ENCODE measurements at regions of chr6 and their contacts with region 1.

Region 1: GRCh38 chr6:29850011-29850553 is 22.5 kb downstream of the HLA-G start:
- DNase-seq: no peak
- H3K4me3 ChIP-seq: peak overlapping the region in 1 of 3 donors; percentile 43
- H3K27ac ChIP-seq: no peak overlapping the region
- H3K4me1 ChIP-seq: no peaks in the 10 kb centered on the region
- H3K27me3 ChIP-seq: peaks cover 0 to 12% of the 10 kb centered on the region in 2 donors
- CTCF ChIP-seq: no peak
- POLR2A ChIP-seq: no peak

Region 2: GRCh38 chr6:29705389-29706231 is 144.5 kb before region 1 on chr6:
- intact Hi-C with region 1: no loop called
- DNase-seq: no peak
- H3K4me3 ChIP-seq: no peak overlapping the region
- H3K27ac ChIP-seq: no peak overlapping the region
- H3K4me1 ChIP-seq: no peaks in the 10 kb centered on the region
- H3K27me3 ChIP-seq: peaks cover 0 to 4% of the 10 kb centered on the region in 2 donors
- CTCF ChIP-seq: peak; percentile 65 to 69 (median 66)
- POLR2A ChIP-seq: no peak

Region 3: DNA sequence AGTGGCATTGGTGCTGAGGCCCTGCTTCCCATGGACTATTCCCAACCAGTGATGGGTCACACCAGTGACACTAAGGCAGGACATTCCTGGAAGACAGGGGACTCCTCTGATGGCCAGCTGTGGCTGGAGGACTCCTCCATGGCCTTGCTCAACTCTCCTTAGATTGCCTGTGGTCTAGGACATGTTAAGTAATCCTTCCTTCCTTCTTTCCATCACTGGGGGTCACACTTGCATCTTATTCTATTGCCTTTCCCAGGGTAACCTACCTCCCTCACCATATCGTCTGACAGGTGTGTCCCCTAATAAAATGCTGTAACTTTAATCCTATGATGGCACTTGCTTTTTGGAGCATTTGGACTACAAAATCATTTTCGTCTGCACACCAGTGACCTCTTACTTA is 67.8 kb after region 1 on chr6:
- intact Hi-C with region 1: no loop called
- DNase-seq: no peak
- H3K4me3 ChIP-seq: no peak overlapping the region
- H3K27ac ChIP-seq: no peak overlapping the region
- H3K4me1 ChIP-seq: no peaks in the 10 kb centered on the region
- H3K27me3 ChIP-seq: no peaks in the 10 kb centered on the region
- CTCF ChIP-seq: no peak
- POLR2A ChIP-seq: no peak

Region 4: DNA sequence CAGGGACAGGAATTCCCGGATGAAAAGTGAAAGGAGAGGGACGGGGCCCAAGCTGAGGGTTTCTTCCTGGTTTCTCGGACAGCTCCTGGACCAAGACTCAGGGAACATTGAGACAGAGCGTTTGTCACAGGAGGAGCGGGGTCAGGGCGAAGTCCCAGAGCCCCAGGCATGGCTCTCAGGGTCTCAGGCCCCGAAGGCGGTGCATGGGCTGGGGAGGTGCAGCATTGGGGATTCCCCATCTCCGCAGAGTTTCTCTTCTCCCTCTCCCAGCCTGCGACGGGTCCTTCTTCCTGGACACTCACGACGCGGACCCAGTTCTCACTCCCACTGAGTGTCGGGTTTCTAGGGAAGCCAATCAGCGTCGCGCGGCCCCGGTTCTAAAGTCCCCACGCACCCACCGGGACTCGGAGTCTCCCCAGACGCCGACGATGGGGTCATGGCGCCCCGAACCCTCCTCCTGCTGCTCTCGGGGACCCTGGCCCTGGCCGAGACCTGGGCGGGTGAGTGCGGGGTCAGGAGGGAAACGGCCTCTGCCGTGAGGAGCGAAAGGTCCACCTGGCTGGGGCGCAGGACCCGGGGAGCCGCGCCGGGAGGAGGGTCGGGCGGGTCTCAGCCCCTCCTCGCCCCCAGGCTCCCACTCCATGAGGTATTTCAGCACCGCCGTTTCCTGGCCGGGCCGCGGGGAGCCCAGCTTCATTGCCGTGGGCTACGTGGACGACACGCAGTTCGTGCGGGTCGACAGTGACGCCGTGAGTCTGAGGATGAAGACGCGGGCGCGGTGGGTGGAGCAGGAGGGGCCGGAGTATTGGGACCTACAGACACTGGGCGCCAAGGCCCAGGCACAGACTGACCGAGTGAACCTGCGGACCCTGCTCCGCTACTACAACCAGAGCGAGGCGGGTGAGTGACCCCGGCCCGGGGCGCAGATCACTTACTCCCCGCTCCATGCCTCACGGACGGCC is 156.4 kb after region 1 on chr6:
- intact Hi-C with region 1: loop called (anchors 10 kb)
- DNase-seq: peak; percentile 32 to 58
- H3K4me3 ChIP-seq: peak overlapping the region; percentile 44 to 77 (median 65)
- H3K27ac ChIP-seq: peak overlapping the region; percentile 70 to 72
- H3K4me1 ChIP-seq: no peaks in the 10 kb centered on the region
- H3K27me3 ChIP-seq: no peaks in the 10 kb centered on the region
- CTCF ChIP-seq: no peak
- POLR2A ChIP-seq: no peak